ENCODE measurements at regions of chr11 and their contacts with region 1.

Region 1: GRCh38 chr11:69101115-69101791 is 52.5 kb downstream of the TPCN2 start:
- DNase-seq: peak; percentile 58 to 74 (median 71)
- H3K4me3 ChIP-seq: no peak overlapping the region
- H3K4me3 Mint-ChIP-seq: no peak overlapping the region
- H3K27ac ChIP-seq: no peak overlapping the region
- H3K27ac Mint-ChIP-seq: no peak overlapping the region
- H3K4me1 ChIP-seq: no peaks in the 10 kb centered on the region
- H3K4me1 Mint-ChIP-seq: peaks cover 0 to 3% (median 1%) of the 10 kb centered on the region in 4 donors
- H3K27me3 ChIP-seq: peaks cover 5% of the 10 kb centered on the region
- H3K27me3 Mint-ChIP-seq: peaks cover 1 to 4% of the 10 kb centered on the region in 2 donors

Region 2: GRCh38 chr11:69211920-69212571 is 110.8 kb after region 1 on chr11:
- CTCF ChIA-PET with region 1: no interaction called
- POLR2A ChIA-PET with region 1: no interaction called
- intact Hi-C with region 1: no loop called
- DNase-seq: no peak
- H3K4me3 ChIP-seq: no peak overlapping the region
- H3K4me3 Mint-ChIP-seq: no peak overlapping the region
- H3K27ac ChIP-seq: no peak overlapping the region
- H3K27ac Mint-ChIP-seq: peak overlapping the region in 1 of 7 donors; percentile 25
- H3K4me1 ChIP-seq: no peaks in the 10 kb centered on the region
- H3K4me1 Mint-ChIP-seq: peaks cover 0 to 7% (median 2%) of the 10 kb centered on the region in 4 donors
- H3K27me3 ChIP-seq: no peaks in the 10 kb centered on the region
- H3K27me3 Mint-ChIP-seq: peaks cover 7 to 15% of the 10 kb centered on the region in 2 donors

Region 3: DNA sequence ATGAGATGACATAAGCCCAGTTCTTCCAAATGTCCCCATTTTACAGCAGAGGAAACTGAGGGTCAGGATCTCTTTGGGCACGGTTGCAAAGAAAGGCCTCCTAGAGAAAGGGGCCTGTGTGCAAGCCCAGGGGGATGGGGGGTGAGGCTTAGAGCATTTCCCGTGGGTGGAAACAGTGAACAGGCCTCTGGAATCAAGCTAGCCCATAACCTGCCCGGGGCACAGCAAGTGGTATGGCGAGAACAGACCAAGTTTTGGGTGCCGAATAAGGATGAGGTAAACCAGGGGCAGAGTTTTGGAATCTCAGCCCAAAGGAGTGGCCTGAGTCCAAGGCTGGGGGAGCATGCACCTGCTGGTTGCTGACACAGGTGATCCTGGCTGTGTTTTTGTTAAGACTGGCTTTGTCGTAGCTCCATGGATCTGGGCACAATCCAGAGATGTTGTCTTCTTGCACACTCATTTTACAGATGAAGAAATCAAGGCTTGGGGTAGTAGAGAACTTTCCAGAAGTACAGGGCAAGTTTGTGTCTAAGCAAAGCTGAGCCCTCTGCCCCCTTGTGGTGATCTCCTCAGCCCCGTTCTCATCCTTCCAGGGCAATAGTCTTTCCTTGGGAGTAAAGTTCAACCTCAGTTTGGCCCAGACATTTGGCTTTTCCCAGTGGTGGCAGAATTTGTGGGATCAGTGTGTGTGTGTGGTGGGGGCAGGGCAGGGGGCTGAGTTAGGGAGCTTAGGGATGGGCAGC is 139.2 kb after region 1 on chr11:
- CTCF ChIA-PET with region 1: no interaction called
- POLR2A ChIA-PET with region 1: no interaction called
- intact Hi-C with region 1: loop called (anchors 2 kb)
- DNase-seq: no peak
- H3K4me3 ChIP-seq: no peak overlapping the region
- H3K4me3 Mint-ChIP-seq: no peak overlapping the region
- H3K27ac ChIP-seq: no peak overlapping the region
- H3K27ac Mint-ChIP-seq: no peak overlapping the region
- H3K4me1 ChIP-seq: no peaks in the 10 kb centered on the region
- H3K4me1 Mint-ChIP-seq: peaks cover 4 to 14% (median 7%) of the 10 kb centered on the region in 4 donors
- H3K27me3 ChIP-seq: no peaks in the 10 kb centered on the region
- H3K27me3 Mint-ChIP-seq: peaks cover 1 to 4% of the 10 kb centered on the region in 2 donors

Region 4: DNA sequence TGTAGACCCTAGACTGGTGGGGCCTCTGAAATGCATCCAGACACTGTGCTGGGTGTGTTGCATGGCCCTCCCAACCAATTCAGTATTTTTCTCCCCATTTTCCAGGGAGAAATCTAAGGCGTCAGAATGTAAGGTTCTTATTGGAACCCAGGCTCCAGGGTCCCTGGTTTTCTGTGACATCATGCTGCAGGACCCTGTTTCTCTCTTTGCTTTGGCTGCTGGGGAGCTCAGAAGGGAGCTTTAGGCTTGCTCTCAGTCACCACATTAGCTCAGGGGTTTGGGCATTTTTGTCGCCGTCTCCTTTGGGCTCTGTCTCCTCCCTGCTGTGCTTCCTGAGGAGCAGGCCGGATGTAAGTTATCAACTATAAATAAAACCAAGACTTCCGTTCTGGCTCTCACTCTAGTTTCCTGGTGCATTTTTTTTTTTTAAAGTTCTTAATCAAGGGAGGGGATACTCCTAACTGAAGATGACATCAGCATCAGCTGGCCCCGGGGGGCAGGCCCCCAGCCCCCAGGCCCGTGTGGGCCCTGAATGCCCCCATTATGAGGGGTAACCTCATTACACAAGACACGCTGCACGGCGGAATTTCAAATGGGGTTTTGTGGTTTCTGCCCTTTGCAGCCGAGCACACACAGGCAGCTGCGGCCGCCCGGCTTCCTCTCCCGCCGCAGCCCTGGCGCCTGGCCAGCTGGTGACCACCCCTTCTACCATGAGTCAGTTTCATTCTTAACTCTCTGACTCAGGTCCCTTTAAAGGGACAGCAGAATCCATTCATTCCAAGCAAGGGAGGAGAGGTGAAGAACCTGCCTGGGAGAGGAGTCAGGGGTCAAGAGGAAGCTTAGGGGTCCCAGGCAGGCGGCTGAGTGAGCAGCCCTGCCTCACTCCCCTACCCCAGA is 195.9 kb after region 1 on chr11:
- CTCF ChIA-PET with region 1: interaction called, 5 read pairs
- POLR2A ChIA-PET with region 1: no interaction called
- intact Hi-C with region 1: loop called (anchors 1 kb)
- DNase-seq: peak; percentile 78 to 91 (median 81)
- H3K4me3 ChIP-seq: peak overlapping the region; percentile 39 to 57
- H3K4me3 Mint-ChIP-seq: peak overlapping the region; percentile 79 to 93 (median 86)
- H3K27ac ChIP-seq: peak overlapping the region; percentile 36
- H3K27ac Mint-ChIP-seq: peak overlapping the region; percentile 76 to 99 (median 96)
- H3K4me1 ChIP-seq: peaks cover 65% of the 10 kb centered on the region
- H3K4me1 Mint-ChIP-seq: peaks cover 40 to 69% (median 55%) of the 10 kb centered on the region in 4 donors
- H3K27me3 ChIP-seq: no peaks in the 10 kb centered on the region
- H3K27me3 Mint-ChIP-seq: no peaks in the 10 kb centered on the region

Region 5: DNA sequence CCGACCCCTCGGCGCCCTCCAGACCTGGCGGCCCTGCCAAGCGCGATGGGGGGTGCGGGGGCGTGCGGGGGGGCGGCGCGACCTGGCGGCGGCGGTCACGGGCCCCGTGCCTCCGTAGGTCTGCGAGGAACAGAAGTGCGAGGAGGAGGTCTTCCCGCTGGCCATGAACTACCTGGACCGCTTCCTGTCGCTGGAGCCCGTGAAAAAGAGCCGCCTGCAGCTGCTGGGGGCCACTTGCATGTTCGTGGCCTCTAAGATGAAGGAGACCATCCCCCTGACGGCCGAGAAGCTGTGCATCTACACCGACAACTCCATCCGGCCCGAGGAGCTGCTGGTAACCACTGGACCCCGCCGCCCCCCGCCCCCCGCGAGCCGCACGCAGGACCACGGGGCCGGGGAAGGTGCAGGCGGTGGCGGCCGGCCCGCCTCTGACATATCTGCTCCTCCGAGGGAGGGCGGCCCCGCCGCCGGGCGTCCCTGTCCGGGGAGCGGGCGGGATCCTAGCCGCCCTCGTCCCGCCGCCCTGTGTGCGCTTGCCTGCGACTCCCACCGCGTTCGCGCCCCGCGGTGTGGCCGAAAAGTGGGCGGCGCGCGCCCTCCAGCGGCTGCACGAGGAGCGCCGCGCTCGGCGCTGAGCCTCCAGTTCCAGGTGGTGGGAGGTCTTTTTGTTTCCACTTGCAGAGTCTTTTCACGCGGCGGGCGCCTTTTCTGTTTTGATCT is 541.8 kb after region 1 on chr11:
- CTCF ChIA-PET with region 1: interaction called, 48 read pairs
- POLR2A ChIA-PET with region 1: interaction called, 3 read pairs
- intact Hi-C with region 1: no loop called
- DNase-seq: peak; percentile 59 to 82 (median 78)
- H3K4me3 ChIP-seq: peak overlapping the region in 1 of 2 donors; percentile 64
- H3K4me3 Mint-ChIP-seq: peak overlapping the region; percentile 70 to 87 (median 76)
- H3K27ac ChIP-seq: no peak overlapping the region
- H3K27ac Mint-ChIP-seq: peak overlapping the region in 1 of 7 donors; percentile 10
- H3K4me1 ChIP-seq: peaks cover 40% of the 10 kb centered on the region
- H3K4me1 Mint-ChIP-seq: peaks cover 11 to 25% (median 18%) of the 10 kb centered on the region in 4 donors
- H3K27me3 ChIP-seq: peaks cover 21% of the 10 kb centered on the region
- H3K27me3 Mint-ChIP-seq: peaks cover 14 to 22% of the 10 kb centered on the region in 2 donors

Region 6: DNA sequence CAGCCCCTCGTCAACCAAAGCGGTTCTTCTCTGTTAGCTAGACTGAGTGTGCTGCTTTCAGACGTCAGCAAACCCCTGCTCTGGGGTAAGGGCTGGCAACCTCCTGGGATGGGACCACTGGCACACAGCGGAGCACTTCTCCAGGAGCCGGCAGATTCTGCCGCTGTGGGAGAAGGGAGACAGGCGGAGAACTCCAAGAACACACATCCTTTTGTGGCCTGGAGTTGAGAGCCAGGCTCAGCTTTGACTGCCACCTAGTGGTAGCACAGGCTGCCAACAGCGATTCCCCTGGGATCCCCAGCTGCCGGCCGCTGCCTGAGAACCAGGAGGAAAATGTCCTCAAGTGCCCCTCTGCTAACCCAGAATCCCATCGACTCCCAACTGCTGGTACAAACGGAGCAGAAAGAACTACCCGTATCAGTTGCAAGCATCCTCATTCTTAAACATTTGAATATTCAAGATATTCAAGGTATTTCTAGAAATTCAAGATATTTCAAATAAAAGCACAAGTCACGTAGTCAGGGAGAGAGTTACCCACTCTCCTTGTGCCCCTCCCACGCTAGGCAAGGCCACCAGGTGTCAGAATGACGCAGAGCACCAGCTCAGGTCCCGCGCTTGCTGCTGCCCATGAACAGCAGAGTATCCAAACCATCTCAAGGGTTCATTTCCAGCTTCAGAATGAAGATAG is 569.0 kb after region 1 on chr11:
- CTCF ChIA-PET with region 1: interaction called, 5 read pairs
- POLR2A ChIA-PET with region 1: no interaction called
- intact Hi-C with region 1: loop called (anchors 1 kb)
- DNase-seq: peak; percentile 40 to 54 (median 52)
- H3K4me3 ChIP-seq: no peak overlapping the region
- H3K4me3 Mint-ChIP-seq: no peak overlapping the region
- H3K27ac ChIP-seq: no peak overlapping the region
- H3K27ac Mint-ChIP-seq: peak overlapping the region in 6 of 7 donors; percentile 0 to 70 (median 54)
- H3K4me1 ChIP-seq: peaks cover 37% of the 10 kb centered on the region
- H3K4me1 Mint-ChIP-seq: peaks cover 14 to 42% (median 31%) of the 10 kb centered on the region in 4 donors
- H3K27me3 ChIP-seq: no peaks in the 10 kb centered on the region
- H3K27me3 Mint-ChIP-seq: peaks cover 0 to under 1% of the 10 kb centered on the region in 2 donors